ENCODE measurements at regions of chr12 and their contacts with region 1.

Region 1: DNA sequence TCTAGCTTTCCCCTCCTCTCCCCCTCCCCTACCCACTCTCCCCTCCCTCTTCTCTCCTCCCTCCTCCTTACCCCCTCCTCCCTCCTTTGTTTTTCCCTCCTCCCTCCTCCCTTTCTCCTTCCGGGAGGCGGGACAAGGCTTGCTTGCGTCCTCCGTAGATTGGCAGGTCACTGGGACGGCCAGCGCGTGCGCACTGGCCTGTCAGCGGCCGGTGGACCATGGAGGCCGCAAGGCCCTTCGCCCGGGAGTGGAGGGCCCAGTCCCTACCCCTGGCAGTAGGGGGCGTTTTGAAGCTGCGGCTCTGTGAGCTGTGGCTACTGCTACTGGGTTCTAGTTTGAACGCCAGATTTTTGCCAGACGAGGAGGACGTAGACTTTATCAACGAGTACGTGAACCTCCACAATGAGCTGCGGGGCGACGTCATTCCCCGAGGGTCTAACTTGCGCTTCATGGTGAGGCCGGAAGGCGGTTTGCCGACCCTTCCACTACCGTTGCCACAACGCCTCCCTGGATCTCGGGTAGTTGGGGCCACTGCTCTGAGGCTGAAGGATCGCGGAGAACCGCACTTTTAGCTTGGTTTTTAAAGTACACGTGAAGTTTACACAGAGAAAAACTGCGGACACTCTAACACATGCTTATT is at the start of gene GLIPR1L2:
- DNase-seq: peak; percentile 99
- H3K4me3 ChIP-seq: peak within 1 kb of the TSS; percentile 56
- H3K27ac ChIP-seq: peak within 1 kb of the TSS; percentile 84
- H3K4me1 ChIP-seq: peaks cover 9% of the 10 kb centered on the region
- H3K27me3 ChIP-seq: no peaks in the 10 kb centered on the region
- CTCF ChIP-seq: peak; percentile 92
- total RNA-seq, gene GLIPR1L2: 0.28 TPM in 1 of 2 replicates, not detected in the other

Region 2: GRCh38 chr12:75480469-75480949 is 89.5 kb after region 1 on chr12 and contains the start of gene GLIPR1:
- CTCF ChIA-PET with region 1: interaction called, 7 read pairs
- POLR2A ChIA-PET with region 1: no interaction called
- intact Hi-C with region 1: loop called (anchors 5 kb)
- DNase-seq: peak; percentile 84
- H3K4me3 ChIP-seq: peak within 1 kb of the TSS; percentile 28
- H3K27ac ChIP-seq: peak within 1 kb of the TSS; percentile 65
- H3K4me1 ChIP-seq: peaks cover 27% of the 10 kb centered on the region
- H3K27me3 ChIP-seq: no peaks in the 10 kb centered on the region
- CTCF ChIP-seq: no peak
- total RNA-seq, gene GLIPR1: 11.3 and 19.7 TPM in 2 replicates